ENCODE measurements at regions of chr14 and their contacts with region 1.

Region 1: DNA sequence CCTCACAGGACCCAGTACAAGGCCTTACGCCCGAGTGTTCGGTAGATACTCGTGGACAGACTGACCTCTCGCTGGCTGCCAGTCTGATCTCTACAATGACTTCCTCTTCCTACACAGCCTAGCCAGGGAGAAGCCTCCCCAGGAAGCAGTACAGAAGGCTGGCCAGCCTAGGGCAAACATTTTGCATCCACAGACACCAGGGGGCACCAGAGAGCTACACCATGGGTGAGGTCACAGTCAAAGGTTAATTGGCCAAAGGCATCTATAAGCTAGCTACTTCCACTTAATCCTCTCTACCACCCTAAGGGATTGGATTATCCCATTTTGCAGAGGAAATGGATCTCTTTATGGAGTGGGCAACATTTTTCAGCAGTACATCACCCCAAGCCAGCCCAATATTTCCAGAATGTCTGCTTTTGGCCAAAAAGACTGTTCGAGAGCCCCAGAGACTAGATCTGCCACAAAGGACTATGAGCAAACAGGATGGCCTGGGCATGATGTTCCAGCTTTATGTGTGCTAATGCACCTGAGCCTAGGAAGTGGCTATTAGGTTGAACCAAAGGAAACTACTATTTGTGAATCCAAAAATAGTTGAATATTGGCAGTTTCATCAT is 14.6 kb upstream of the PNMA1 start:
- DNase-seq: peak; percentile 96
- H3K4me3 Mint-ChIP-seq: peak overlapping the region; percentile 16
- H3K27ac Mint-ChIP-seq: peak overlapping the region; percentile 83
- H3K4me1 Mint-ChIP-seq: peaks cover 29% of the 10 kb centered on the region
- H3K27me3 Mint-ChIP-seq: no peaks in the 10 kb centered on the region

Region 2: GRCh38 chr14:73825551-73826188 is 96.8 kb after region 1 on chr14:
- intact Hi-C with region 1: loop called (anchors 1 kb)
- DNase-seq: peak; percentile 91
- H3K4me3 Mint-ChIP-seq: no peak overlapping the region
- H3K27ac Mint-ChIP-seq: no peak overlapping the region
- H3K4me1 Mint-ChIP-seq: peaks cover 16% of the 10 kb centered on the region
- H3K27me3 Mint-ChIP-seq: peaks cover 5% of the 10 kb centered on the region

Region 3: GRCh38 chr14:73870525-73871235 is 141.9 kb after region 1 on chr14:
- intact Hi-C with region 1: loop called (anchors 1 kb)
- DNase-seq: no peak
- H3K4me3 Mint-ChIP-seq: no peak overlapping the region
- H3K27ac Mint-ChIP-seq: no peak overlapping the region
- H3K4me1 Mint-ChIP-seq: no peaks in the 10 kb centered on the region
- H3K27me3 Mint-ChIP-seq: no peaks in the 10 kb centered on the region

Region 4: GRCh38 chr14:74038015-74038859 is 309.4 kb after region 1 on chr14:
- intact Hi-C with region 1: loop called (anchors 2 kb)
- DNase-seq: peak; percentile 77
- H3K4me3 Mint-ChIP-seq: no peak overlapping the region
- H3K27ac Mint-ChIP-seq: no peak overlapping the region
- H3K4me1 Mint-ChIP-seq: no peaks in the 10 kb centered on the region
- H3K27me3 Mint-ChIP-seq: peaks cover 1% of the 10 kb centered on the region

Measured in activated CD4-positive, alpha-beta T cell treated with anti-CD3 and anti-CD28 coated beads, Interleukin-2, amount 10 ng/mL, durations not matched to agents 24 days and 14 days (primary cell).